Transverse colon (tissue), 4 donors: ENCODE measurements at regions of chr19 and their contacts with region 1.

Region 1: GRCh38 chr19:33868788-33869412 is 72.2 kb downstream of the KCTD15 start:
- DNase-seq: peak; percentile 14
- H3K4me3 ChIP-seq: peak overlapping the region in 2 of 4 donors; percentile 0 to 12
- H3K27ac ChIP-seq: peak overlapping the region; percentile 4 to 33 (median 23)
- H3K4me1 ChIP-seq: peaks cover 0 to 11% (median 4%) of the 10 kb centered on the region in 4 donors
- H3K27me3 ChIP-seq: peaks cover 8% of the 10 kb centered on the region
- CTCF ChIP-seq: no peak
- EP300 ChIP-seq: no peak
- POLR2A ChIP-seq: no peak

Region 2: DNA sequence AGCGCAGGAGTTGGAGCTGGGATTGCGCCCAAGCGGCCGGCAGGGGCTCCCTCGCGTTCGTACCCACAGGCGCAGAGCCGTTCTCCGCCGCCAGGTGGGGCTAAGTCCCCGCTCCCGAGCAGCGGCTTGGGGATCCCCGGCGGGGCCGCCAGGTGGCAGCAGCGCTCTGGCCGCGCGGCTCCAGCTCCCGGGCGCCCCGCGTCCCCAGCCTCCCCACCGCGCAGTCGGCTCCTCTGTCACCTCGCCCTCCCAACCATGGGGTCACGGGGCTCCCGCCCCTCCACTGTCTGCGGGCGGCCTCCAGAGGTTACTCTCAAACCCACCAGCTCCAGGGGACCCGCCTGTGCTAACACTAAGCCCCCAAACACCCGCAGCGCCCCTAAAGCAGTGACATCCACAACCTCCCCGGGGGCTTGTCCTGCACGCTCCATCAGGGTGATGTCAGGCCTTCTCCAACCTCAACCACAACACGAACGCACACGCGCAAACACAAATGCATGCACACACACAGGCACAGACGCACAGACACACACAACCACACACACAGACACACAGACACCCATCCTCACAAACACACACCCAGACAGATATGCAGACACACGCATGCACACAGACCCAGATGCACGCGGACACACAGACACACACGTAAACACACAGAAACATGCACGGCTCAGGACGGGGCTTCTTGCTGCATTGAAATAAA is 90.7 kb before region 1 on chr19:
- in situ Hi-C with region 1: no loop called
- intact Hi-C with region 1: no loop called
- DNase-seq: peak; percentile 85
- H3K4me3 ChIP-seq: no peak overlapping the region
- H3K27ac ChIP-seq: no peak overlapping the region
- H3K4me1 ChIP-seq: peaks cover 0 to 4% (median 2%) of the 10 kb centered on the region in 4 donors
- H3K27me3 ChIP-seq: peaks cover 19% of the 10 kb centered on the region
- CTCF ChIP-seq: peak; percentile 100
- EP300 ChIP-seq: no peak
- POLR2A ChIP-seq: no peak

Region 3: GRCh38 chr19:33795370-33796163 is 73.3 kb before region 1 on chr19:
- in situ Hi-C with region 1: no loop called
- intact Hi-C with region 1: loop called (anchors 5 kb)
- DNase-seq: peak; percentile 82
- H3K4me3 ChIP-seq: peak overlapping the region; percentile 71 to 82 (median 78)
- H3K27ac ChIP-seq: peak overlapping the region; percentile 93 to 96 (median 95)
- H3K4me1 ChIP-seq: peaks cover 0 to 22% (median 7%) of the 10 kb centered on the region in 4 donors
- H3K27me3 ChIP-seq: peaks cover 5% of the 10 kb centered on the region
- CTCF ChIP-seq: peak in 4 of 5 experiments; percentile 73 to 88 (median 82)
- EP300 ChIP-seq: no peak
- POLR2A ChIP-seq: peak; percentile 58